ENCODE measurements at regions of chr6 and their contacts with region 1.

Region 1: DNA sequence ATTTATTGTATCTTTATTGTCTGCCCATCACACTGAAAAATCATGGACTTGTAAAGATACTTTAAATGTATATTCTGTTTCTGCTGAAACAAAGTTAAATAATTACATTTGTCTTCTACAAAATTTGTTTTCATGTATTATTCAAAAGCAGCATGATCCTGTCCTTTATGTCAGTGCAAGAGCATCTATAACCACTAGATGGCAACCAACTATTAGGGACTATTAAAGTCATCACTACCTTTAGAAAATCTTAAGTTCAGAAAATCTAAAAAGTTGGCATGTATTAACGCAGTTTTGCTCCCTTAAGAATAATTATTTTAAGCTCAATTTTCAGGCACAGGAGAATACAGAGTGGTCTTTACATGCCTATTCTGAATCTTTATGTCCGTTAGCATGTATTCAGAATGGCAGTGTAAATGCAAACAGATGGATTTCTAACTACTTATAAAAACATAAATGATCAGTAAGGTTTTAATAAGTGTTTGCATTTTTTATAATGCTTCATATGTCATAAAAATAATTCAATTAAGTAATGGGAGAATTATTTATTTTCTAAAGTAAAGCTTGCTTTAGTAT is 17.8 kb downstream of the TMEM30A start:
- DNase-seq: no peak
- H3K4me3 Mint-ChIP-seq: no peak overlapping the region
- H3K27ac Mint-ChIP-seq: no peak overlapping the region
- H3K4me1 Mint-ChIP-seq: peaks cover 28% of the 10 kb centered on the region
- H3K27me3 Mint-ChIP-seq: no peaks in the 10 kb centered on the region

Region 2: DNA sequence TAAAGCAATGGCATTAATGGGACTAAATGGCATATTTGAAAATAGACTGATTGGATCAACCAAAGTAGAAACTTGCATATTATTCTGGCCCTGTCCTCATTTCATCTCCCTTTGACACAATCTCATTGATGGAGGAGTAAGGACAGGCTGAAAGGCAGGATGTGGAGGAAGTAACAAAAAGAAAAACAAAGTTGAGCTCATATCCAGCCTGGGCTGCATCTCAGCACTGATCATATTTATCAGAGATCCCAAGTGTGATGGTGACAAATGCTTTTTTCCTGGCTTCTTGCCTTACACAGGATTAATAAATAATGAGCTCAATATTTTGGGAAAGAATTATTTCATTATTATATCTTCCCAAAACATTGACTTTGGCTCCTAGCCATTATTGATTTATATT is 948.1 kb before region 1 on chr6:
- CTCF ChIA-PET with region 1: no interaction called
- POLR2A ChIA-PET with region 1: no interaction called
- DNase-seq: no peak
- H3K4me3 Mint-ChIP-seq: no peak overlapping the region
- H3K27ac Mint-ChIP-seq: no peak overlapping the region
- H3K4me1 Mint-ChIP-seq: no peaks in the 10 kb centered on the region
- H3K27me3 Mint-ChIP-seq: no peaks in the 10 kb centered on the region

Region 3: GRCh38 chr6:75183099-75183541 is 83.7 kb before region 1 on chr6:
- CTCF ChIA-PET with region 1: no interaction called
- POLR2A ChIA-PET with region 1: no interaction called
- DNase-seq: no peak
- H3K4me3 Mint-ChIP-seq: no peak overlapping the region
- H3K27ac Mint-ChIP-seq: no peak overlapping the region
- H3K4me1 Mint-ChIP-seq: no peaks in the 10 kb centered on the region
- H3K27me3 Mint-ChIP-seq: no peaks in the 10 kb centered on the region

Region 4: GRCh38 chr6:75278474-75279077 is 11.8 kb after region 1 on chr6:
- CTCF ChIA-PET with region 1: interaction called, 20 read pairs
- POLR2A ChIA-PET with region 1: interaction called, 28 read pairs
- DNase-seq: no peak
- H3K4me3 Mint-ChIP-seq: no peak overlapping the region
- H3K27ac Mint-ChIP-seq: no peak overlapping the region
- H3K4me1 Mint-ChIP-seq: peaks cover 60% of the 10 kb centered on the region
- H3K27me3 Mint-ChIP-seq: no peaks in the 10 kb centered on the region

Region 5: DNA sequence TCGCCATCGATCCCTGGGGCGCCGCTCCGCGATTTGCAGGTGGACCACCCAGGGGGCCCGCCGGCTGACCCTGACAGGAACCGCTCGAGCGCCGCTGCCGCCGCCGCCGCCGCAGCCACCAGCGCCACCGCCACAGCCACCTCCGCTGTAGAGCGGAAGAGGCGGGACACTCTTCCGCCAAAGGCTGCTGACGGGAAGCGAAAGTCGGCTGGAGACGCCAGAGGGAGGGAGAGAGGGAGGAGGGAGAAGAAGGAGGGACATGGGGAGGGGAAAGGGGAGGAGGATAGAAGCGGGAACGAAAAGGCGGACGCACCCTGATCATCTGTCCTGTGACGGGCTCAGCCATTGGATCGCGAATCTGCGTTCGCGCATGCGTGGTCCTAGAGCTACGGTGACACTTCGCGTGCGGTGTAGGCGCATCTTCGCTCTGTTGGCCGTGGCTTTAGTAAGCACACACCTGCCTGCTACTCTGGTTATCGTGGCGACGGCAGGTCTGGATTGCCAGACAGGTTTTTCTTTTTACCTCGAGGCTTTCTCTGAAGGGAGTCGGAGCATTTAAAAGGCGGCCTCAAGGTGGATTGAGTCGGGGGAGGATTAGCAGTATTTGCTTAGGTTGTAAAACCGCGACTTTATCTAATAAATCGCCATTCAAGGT is 18.0 kb after region 1 on chr6 and contains the start of gene TMEM30A:
- CTCF ChIA-PET with region 1: interaction called, 20 read pairs
- POLR2A ChIA-PET with region 1: interaction called, 28 read pairs
- DNase-seq: peak; percentile 97
- H3K4me3 Mint-ChIP-seq: no peak within 1 kb of the TSS
- H3K27ac Mint-ChIP-seq: no peak within 1 kb of the TSS
- H3K4me1 Mint-ChIP-seq: peaks cover 47% of the 10 kb centered on the region
- H3K27me3 Mint-ChIP-seq: no peaks in the 10 kb centered on the region
- total RNA-seq, gene TMEM30A: 60.1 to 60.4 TPM